ENCODE measurements at regions of chr9 and their contacts with region 1.

Region 1: GRCh38 chr9:124658165-124659017 is 112.7 kb downstream of the NR6A1 start:
- DNase-seq: peak; percentile 92 to 97 (median 95)
- H3K4me3 ChIP-seq: peak overlapping the region in 6 of 7 experiments; percentile 78 to 95 (median 90)
- H3K27ac ChIP-seq: peak overlapping the region; percentile 89 to 95
- H3K4me1 ChIP-seq: peaks cover 12 to 56% (median 35%) of the 10 kb centered on the region in 4 experiments
- H3K27me3 ChIP-seq: no peaks in the 10 kb centered on the region

Region 2: DNA sequence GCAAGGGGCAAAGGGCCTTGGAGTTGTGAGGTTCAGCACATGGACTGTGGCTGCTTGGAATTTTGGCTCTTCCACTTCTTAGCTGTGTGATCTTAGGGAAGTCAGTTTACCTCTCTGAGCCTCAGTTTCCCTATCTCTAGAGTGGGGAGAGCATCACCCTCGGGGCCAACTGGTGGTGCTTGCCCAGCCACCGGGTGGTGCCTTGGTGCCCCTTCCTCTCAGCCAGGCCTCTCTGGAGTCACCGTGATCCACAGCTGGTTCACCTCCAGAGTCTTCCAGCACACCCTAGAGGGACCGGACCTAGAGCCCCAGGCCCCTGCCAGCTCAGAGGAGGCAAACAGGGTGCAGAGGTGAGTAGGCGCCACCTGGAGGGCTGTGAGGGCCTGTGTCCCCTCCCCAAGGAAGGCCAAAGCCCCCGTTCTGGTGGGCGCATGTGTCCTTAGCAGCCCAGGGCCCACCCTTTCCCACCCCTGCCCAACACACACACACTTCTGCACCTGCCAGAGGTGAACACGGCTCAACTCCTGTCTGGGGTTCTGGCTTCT is 200.4 kb before region 1 on chr9:
- CTCF ChIA-PET with region 1: no interaction called
- POLR2A ChIA-PET with region 1: no interaction called
- DNase-seq: no peak
- H3K4me3 ChIP-seq: no peak overlapping the region
- H3K27ac ChIP-seq: no peak overlapping the region
- H3K4me1 ChIP-seq: peaks cover 0 to 5% (median 2%) of the 10 kb centered on the region in 4 experiments
- H3K27me3 ChIP-seq: peaks cover 0 to 16% (median 4%) of the 10 kb centered on the region in 5 experiments

Region 3: DNA sequence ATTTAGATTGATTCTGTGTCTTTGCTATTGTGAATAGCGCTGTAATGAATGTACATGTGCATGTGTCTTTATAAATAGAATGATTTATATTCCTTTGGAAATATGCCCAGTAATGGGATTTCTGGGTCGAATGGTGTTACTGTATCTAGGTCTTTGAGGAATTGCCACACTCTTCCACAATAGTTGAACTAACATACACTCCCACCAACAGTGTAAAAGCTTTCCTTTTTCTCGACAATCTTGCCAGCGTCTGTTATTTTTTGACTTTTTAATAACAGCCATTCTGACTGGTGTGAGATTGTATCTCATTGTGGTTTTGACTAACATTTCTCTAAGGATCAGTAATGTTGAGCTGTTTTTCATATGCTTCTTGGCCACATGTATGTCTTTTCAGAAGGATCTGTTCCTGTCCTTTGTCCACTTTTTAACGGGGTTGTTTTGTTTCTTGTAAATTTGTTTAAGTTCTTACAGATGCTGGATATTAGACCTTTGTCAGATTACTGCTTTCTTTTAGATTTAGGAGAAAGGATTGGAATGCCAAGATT is 26.2 kb before region 1 on chr9:
- CTCF ChIA-PET with region 1: interaction called, 12 read pairs
- POLR2A ChIA-PET with region 1: interaction called, 5 read pairs
- DNase-seq: peak; percentile 10 to 74 (median 49)
- H3K4me3 ChIP-seq: peak overlapping the region in 4 of 7 experiments; percentile 9 to 49 (median 38)
- H3K27ac ChIP-seq: no peak overlapping the region
- H3K4me1 ChIP-seq: peaks cover 0 to 15% (median 4%) of the 10 kb centered on the region in 4 experiments
- H3K27me3 ChIP-seq: no peaks in the 10 kb centered on the region

Region 4: DNA sequence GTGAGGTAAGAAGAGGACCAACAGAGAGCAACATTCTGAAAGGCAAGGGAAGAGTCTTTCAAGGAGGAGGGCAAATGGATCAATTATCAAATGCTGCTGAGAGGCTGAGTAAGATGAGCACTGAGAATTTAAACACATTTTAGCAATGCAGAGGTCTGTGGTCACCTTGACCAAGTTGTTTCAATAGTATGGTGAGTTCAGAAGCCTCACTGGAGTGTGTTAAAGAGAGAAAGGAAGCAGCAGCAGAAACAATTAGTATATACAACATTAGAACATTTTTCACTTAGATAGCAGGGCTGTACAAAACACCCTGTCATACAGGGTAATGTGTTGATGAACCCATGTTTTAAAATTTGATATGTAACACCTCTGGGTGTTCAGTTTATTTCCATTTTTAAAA is 18.8 kb before region 1 on chr9:
- CTCF ChIA-PET with region 1: interaction called, 15 read pairs
- POLR2A ChIA-PET with region 1: no interaction called
- DNase-seq: no peak
- H3K4me3 ChIP-seq: no peak overlapping the region
- H3K27ac ChIP-seq: no peak overlapping the region
- H3K4me1 ChIP-seq: no peaks in the 10 kb centered on the region
- H3K27me3 ChIP-seq: no peaks in the 10 kb centered on the region

Region 5: DNA sequence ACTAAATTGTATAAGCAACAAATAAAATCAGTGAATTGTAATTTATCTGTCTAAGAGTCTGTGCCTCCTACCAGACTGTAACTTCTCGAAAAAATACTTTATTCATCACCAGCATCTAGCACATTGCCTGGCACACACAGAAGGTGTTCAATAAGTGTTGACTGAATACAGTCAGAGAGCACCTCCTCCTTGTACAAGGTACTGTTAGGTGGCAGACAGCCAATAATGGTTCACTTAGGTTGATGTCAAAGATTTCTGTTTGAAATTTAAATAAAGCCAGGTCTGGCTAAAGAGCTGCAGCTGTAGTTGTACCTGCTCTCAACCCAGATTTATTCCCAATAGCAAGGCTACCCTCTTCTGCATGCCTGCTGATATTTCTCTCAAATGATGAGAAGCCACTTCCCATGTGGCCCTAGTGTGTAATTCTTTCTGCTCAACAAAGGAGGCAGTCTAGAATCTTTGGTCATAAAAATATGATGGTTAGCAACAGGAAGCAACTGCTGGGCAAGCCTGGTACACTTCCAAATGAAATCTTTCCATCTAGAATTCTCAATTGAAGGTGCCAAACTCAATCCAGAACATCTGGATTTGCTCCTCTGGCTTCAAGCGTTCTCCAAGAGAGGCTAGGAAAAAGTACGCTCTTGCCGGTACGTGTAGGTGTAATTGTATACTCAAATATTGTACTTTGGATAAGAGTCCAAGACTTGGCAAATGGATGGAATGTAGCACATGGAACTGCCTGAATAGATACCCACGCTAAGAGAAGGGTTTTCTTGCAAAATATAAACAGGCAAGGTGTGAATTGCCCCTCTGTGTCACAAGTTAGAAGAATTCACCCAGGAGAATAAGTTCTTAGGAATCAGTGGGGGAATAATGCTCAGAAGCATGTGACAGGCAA is 17.1 kb after region 1 on chr9:
- CTCF ChIA-PET with region 1: interaction called, 14 read pairs
- POLR2A ChIA-PET with region 1: interaction called, 7 read pairs
- DNase-seq: peak in 2 of 3 donors; percentile 33 to 48
- H3K4me3 ChIP-seq: no peak overlapping the region
- H3K27ac ChIP-seq: no peak overlapping the region
- H3K4me1 ChIP-seq: peaks cover 0 to 2% (median under 1%) of the 10 kb centered on the region in 4 experiments
- H3K27me3 ChIP-seq: no peaks in the 10 kb centered on the region

Region 6: GRCh38 chr9:125169895-125170294 is 511.5 kb after region 1 on chr9:
- CTCF ChIA-PET with region 1: no interaction called
- POLR2A ChIA-PET with region 1: no interaction called
- DNase-seq: no peak
- H3K4me3 ChIP-seq: no peak overlapping the region
- H3K27ac ChIP-seq: no peak overlapping the region
- H3K4me1 ChIP-seq: peaks cover 5 to 14% (median 11%) of the 10 kb centered on the region in 4 experiments
- H3K27me3 ChIP-seq: no peaks in the 10 kb centered on the region